HCT116 (cell line): ENCODE measurements at regions of chr5 and their contacts with region 1.

Region 1: GRCh38 chr5:115069087-115069968 is 100.4 kb downstream of the TRIM36 start:
- DNase-seq: peak; percentile 51
- ATAC-seq: peak; percentile 90
- H3K4me3 ChIP-seq: no peak overlapping the region
- H3K27ac ChIP-seq: no peak overlapping the region
- H3K4me1 ChIP-seq: peaks cover 0 to 7% of the 10 kb centered on the region in 2 experiments; a peak in 2 of 4 replicates
- H3K27me3 ChIP-seq: peaks cover 3% of the 10 kb centered on the region; the same call in 1 of the 2 replicates
- CTCF ChIP-seq: peak; percentile 55 to 87 (median 87); a peak in 5 of 6 replicates
- POLR2A ChIP-seq: no peak
- RAD21 ChIP-seq: peak; percentile 88

Region 2: GRCh38 chr5:113678924-113679575 is 1390.3 kb before region 1 on chr5:
- CTCF ChIA-PET with region 1: interaction called, 7 read pairs
- POLR2A ChIA-PET with region 1: no interaction called
- RAD21 ChIA-PET with region 1: no interaction called
- intact Hi-C with region 1: loop called (anchors 1 kb)
- DNase-seq: peak; percentile 50
- ATAC-seq: peak; percentile 95
- H3K4me3 ChIP-seq: no peak overlapping the region
- H3K27ac ChIP-seq: no peak overlapping the region
- H3K4me1 ChIP-seq: no peaks in the 10 kb centered on the region
- H3K27me3 ChIP-seq: no peaks in the 10 kb centered on the region
- CTCF ChIP-seq: peak; percentile 74 to 80 (median 78); a peak in 5 of 6 replicates
- POLR2A ChIP-seq: no peak
- RAD21 ChIP-seq: peak; percentile 91

Region 3: GRCh38 chr5:114101153-114101552 is 968.2 kb before region 1 on chr5:
- CTCF ChIA-PET with region 1: no interaction called
- POLR2A ChIA-PET with region 1: no interaction called
- RAD21 ChIA-PET with region 1: no interaction called
- intact Hi-C with region 1: loop called (anchors 10 kb)
- DNase-seq: peak; percentile 26
- ATAC-seq: peak; percentile 80
- H3K4me3 ChIP-seq: no peak overlapping the region
- H3K27ac ChIP-seq: no peak overlapping the region
- H3K4me1 ChIP-seq: no peaks in the 10 kb centered on the region
- H3K27me3 ChIP-seq: 0 out of 2 replicates have a peak, but pooled peaks cover 8% of the 10 kb centered on the region
- CTCF ChIP-seq: peak; percentile 44 to 50 (median 48); a peak in 4 of 6 replicates
- POLR2A ChIP-seq: no peak
- RAD21 ChIP-seq: peak; percentile 62

Region 4: DNA sequence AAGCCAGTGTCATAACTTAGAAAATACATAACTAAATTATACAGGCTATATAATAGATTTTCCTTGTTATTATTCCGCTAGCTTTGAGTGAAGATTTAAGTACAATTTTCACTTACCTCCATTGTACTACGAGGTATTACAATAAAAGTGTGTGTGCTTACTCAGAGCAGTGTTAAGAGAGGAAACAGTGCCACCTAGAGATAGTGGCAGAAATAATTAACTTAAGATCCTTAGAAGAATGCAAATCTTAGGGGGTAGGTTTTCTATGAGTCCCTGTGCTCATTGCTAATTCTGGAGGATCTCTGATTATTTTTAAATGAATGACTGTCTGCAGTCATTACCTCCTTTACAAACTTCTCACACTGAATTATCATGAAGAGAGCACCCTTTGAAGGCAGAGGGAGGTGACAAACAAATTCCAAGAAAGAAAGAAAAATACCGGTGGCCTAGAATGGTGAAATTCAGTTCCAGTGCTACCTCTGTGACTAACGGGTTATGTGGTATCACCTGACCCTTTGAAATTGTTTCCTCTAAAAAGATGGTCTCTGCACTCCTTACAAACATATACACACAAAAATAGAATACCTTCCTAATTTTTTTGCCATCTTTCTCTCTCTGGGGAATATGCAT is 279.4 kb before region 1 on chr5:
- CTCF ChIA-PET with region 1: no interaction called
- POLR2A ChIA-PET with region 1: no interaction called
- RAD21 ChIA-PET with region 1: no interaction called
- intact Hi-C with region 1: loop called (anchors 5 kb)
- DNase-seq: peak; percentile 34
- ATAC-seq: peak; percentile 84
- H3K4me3 ChIP-seq: no peak overlapping the region
- H3K27ac ChIP-seq: no peak overlapping the region
- H3K4me1 ChIP-seq: no peaks in the 10 kb centered on the region
- H3K27me3 ChIP-seq: peaks cover 51% of the 10 kb centered on the region
- CTCF ChIP-seq: peak; percentile 38 to 63 (median 39); a peak in 5 of 6 replicates
- POLR2A ChIP-seq: no peak
- RAD21 ChIP-seq: peak; percentile 66

Region 5: GRCh38 chr5:115194676-115195075 is 125.3 kb after region 1 on chr5:
- CTCF ChIA-PET with region 1: no interaction called
- POLR2A ChIA-PET with region 1: no interaction called
- RAD21 ChIA-PET with region 1: no interaction called
- intact Hi-C with region 1: no loop called
- DNase-seq: no peak
- ATAC-seq: no peak
- H3K4me3 ChIP-seq: no peak overlapping the region
- H3K27ac ChIP-seq: no peak overlapping the region
- H3K4me1 ChIP-seq: no peaks in the 10 kb centered on the region
- H3K27me3 ChIP-seq: no peaks in the 10 kb centered on the region
- CTCF ChIP-seq: no peak
- POLR2A ChIP-seq: no peak
- RAD21 ChIP-seq: no peak

Region 6: GRCh38 chr5:115289104-115289503 is 219.8 kb after region 1 on chr5:
- CTCF ChIA-PET with region 1: no interaction called
- POLR2A ChIA-PET with region 1: no interaction called
- RAD21 ChIA-PET with region 1: no interaction called
- intact Hi-C with region 1: no loop called
- DNase-seq: no peak
- ATAC-seq: no peak
- H3K4me3 ChIP-seq: no peak overlapping the region
- H3K27ac ChIP-seq: no peak overlapping the region
- H3K4me1 ChIP-seq: no peaks in the 10 kb centered on the region
- H3K27me3 ChIP-seq: no peaks in the 10 kb centered on the region
- CTCF ChIP-seq: no peak
- POLR2A ChIP-seq: no peak
- RAD21 ChIP-seq: no peak

Region 7: GRCh38 chr5:116216246-116216645 is 1146.9 kb after region 1 on chr5:
- CTCF ChIA-PET with region 1: no interaction called
- POLR2A ChIA-PET with region 1: no interaction called
- RAD21 ChIA-PET with region 1: no interaction called
- intact Hi-C with region 1: no loop called
- DNase-seq: no peak
- ATAC-seq: no peak
- H3K4me3 ChIP-seq: no peak overlapping the region
- H3K27ac ChIP-seq: no peak overlapping the region
- H3K4me1 ChIP-seq: no peaks in the 10 kb centered on the region
- H3K27me3 ChIP-seq: no peaks in the 10 kb centered on the region
- CTCF ChIP-seq: no peak
- POLR2A ChIP-seq: no peak
- RAD21 ChIP-seq: no peak